ENCODE measurements at regions of chr5 and their contacts with region 1.

Region 1: DNA sequence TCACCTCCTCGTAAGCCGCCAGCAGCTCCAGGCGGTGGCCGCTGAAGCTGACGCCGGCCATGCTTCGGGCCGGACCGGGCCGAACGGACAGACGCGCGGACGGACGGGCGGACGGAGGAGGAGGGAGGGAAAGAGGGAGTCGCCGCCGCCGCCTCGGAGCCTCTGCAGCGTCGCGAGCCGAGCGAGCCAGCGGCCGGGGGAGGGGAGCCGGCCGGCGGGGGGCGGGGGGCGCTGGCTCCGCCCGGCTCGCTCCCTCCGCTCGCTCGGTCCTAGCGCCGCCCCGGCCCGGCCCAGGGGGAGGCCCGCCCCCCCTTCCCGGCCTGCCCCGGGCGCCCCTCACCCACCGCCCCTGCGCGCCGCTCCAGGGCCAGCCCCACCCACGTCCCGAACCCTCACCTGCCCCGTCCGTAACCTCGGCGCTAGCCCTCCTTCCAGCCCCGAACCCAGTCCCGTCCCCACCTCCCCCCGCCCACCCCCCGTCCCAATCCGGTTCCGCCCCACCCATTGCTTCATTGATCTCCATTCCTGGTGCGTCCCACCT is at the start of gene DBN1:
- DNase-seq: peak in 2 of 10 donors; percentile 26 to 42
- ATAC-seq: peak; percentile 28 to 31
- H3K4me3 Mint-ChIP-seq: peak within 1 kb of the TSS; percentile 78 to 92 (median 86)
- H3K27ac Mint-ChIP-seq: peak within 1 kb of the TSS; percentile 77 to 94 (median 88)
- H3K4me1 Mint-ChIP-seq: peaks cover 36 to 76% (median 62%) of the 10 kb centered on the region in 4 donors
- H3K27me3 Mint-ChIP-seq: no peaks in the 10 kb centered on the region
- polyA plus RNA-seq, gene DBN1: 20.5 to 25.3 (median 21.8) TPM

Region 2: GRCh38 chr5:177336112-177336511 is 137.4 kb before region 1 on chr5:
- POLR2A ChIA-PET with region 1: no interaction called
- DNase-seq: peak in 1 of 10 donors; percentile 19
- ATAC-seq: peak; percentile 68 to 73
- H3K4me3 Mint-ChIP-seq: peak overlapping the region in 1 of 10 donors; percentile 14
- H3K27ac Mint-ChIP-seq: peak overlapping the region in 1 of 10 donors; percentile 52
- H3K4me1 Mint-ChIP-seq: peaks cover 6 to 35% (median 28%) of the 10 kb centered on the region in 4 donors
- H3K27me3 Mint-ChIP-seq: no peaks in the 10 kb centered on the region

Region 3: GRCh38 chr5:177403792-177404640 is 69.5 kb before region 1 on chr5:
- POLR2A ChIA-PET with region 1: interaction called, 14 read pairs
- DNase-seq: peak; percentile 73 to 92 (median 82)
- ATAC-seq: peak; percentile 80 to 81
- H3K4me3 Mint-ChIP-seq: peak overlapping the region; percentile 60 to 89 (median 80)
- H3K27ac Mint-ChIP-seq: peak overlapping the region in 5 of 10 donors; percentile 27 to 88 (median 60)
- H3K4me1 Mint-ChIP-seq: peaks cover 2 to 47% (median 37%) of the 10 kb centered on the region in 4 donors
- H3K27me3 Mint-ChIP-seq: peaks cover 0 to 9% (median 0%) of the 10 kb centered on the region in 5 donors

Region 4: GRCh38 chr5:177425801-177426565 is 47.5 kb before region 1 on chr5:
- POLR2A ChIA-PET with region 1: interaction called, 15 read pairs
- DNase-seq: peak; percentile 94 to 100 (median 100)
- ATAC-seq: peak; percentile 82 to 84
- H3K4me3 Mint-ChIP-seq: peak overlapping the region; percentile 82 to 98 (median 94)
- H3K27ac Mint-ChIP-seq: peak overlapping the region; percentile 92 to 100 (median 98)
- H3K4me1 Mint-ChIP-seq: peaks cover 28 to 58% (median 49%) of the 10 kb centered on the region in 4 donors
- H3K27me3 Mint-ChIP-seq: no peaks in the 10 kb centered on the region

Region 5: DNA sequence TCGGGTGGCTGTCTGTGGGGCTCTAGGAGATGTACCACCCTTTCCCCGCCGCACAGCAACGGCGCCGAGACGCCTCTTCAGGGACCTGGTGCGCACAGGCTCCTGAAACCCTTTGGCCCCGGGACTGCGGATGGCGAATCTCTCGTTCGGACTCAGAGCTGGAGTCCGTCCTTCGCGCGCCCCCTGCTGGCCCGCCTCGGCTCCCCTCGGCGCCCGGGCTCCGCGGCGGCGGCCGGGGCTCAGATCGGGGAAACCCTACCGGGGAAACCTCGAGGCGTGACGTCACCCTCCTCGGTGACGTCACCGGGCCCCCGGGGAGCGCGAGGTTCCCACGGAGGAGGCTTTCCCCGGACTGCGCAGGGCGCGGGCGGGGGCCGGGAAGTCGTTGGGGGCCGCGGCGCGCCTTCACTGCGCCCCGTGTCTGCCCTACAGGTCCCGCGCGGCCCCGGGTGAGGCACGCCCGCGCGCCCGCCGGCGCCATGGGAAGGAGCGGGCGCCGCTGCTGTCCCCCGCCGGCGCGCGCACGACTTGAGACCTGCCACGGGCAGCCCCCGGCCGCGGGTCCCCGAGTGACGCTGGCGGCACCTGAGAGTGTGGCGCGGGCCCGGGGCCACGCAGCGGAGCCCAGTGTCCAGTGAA is 19.0 kb before region 1 on chr5:
- POLR2A ChIA-PET with region 1: interaction called, 58 read pairs
- DNase-seq: peak; percentile 84 to 98 (median 94)
- ATAC-seq: peak; percentile 46 to 56
- H3K4me3 Mint-ChIP-seq: peak overlapping the region; percentile 33 to 93 (median 84)
- H3K27ac Mint-ChIP-seq: peak overlapping the region in 8 of 10 donors; percentile 67 to 98 (median 90)
- H3K4me1 Mint-ChIP-seq: peaks cover 14 to 41% (median 28%) of the 10 kb centered on the region in 4 donors
- H3K27me3 Mint-ChIP-seq: no peaks in the 10 kb centered on the region

Region 6: GRCh38 chr5:177462021-177462670 is 11.4 kb before region 1 on chr5:
- POLR2A ChIA-PET with region 1: interaction called, 58 read pairs
- DNase-seq: no peak
- ATAC-seq: peak; percentile 12 to 37
- H3K4me3 Mint-ChIP-seq: peak overlapping the region in 1 of 10 donors; percentile 41
- H3K27ac Mint-ChIP-seq: peak overlapping the region in 5 of 10 donors; percentile 9 to 80 (median 60)
- H3K4me1 Mint-ChIP-seq: peaks cover 11 to 20% (median 18%) of the 10 kb centered on the region in 4 donors
- H3K27me3 Mint-ChIP-seq: no peaks in the 10 kb centered on the region

Region 7: DNA sequence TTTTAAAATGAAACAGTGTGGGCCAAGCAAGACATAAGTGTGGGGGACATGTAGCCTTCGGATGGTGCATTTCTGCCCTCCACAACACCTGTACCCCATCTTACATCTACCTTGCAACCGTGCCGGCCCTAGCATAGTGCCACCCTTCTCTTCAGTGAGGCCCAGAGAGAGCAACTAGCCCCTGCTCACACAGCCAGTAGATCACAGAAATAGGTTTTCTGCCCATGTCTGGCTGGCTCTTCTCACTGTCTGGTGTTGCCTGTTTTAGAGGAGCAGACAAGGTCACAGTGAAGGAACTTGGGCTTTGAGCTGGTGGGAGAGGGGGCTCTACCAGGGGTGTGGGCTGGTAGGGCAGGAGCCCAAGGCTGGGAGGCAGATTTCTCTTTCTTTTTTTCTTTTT is 12.7 kb after region 1 on chr5:
- POLR2A ChIA-PET with region 1: interaction called, 13 read pairs
- DNase-seq: no peak
- ATAC-seq: no peak
- H3K4me3 Mint-ChIP-seq: no peak overlapping the region
- H3K27ac Mint-ChIP-seq: peak overlapping the region in 1 of 10 donors; percentile 11
- H3K4me1 Mint-ChIP-seq: peaks cover 0 to 6% (median 2%) of the 10 kb centered on the region in 4 donors
- H3K27me3 Mint-ChIP-seq: no peaks in the 10 kb centered on the region

Region 8: GRCh38 chr5:177497292-177498033 is 23.9 kb after region 1 on chr5 and contains the start of gene PDLIM7:
- POLR2A ChIA-PET with region 1: interaction called, 36 read pairs
- DNase-seq: peak; percentile 84 to 94 (median 92)
- ATAC-seq: peak; percentile 86 to 89
- H3K4me3 Mint-ChIP-seq: peak within 1 kb of the TSS; percentile 70 to 90 (median 84)
- H3K27ac Mint-ChIP-seq: peak within 1 kb of the TSS in 9 of 10 donors; percentile 20 to 90 (median 69)
- H3K4me1 Mint-ChIP-seq: peaks cover 18 to 55% (median 41%) of the 10 kb centered on the region in 4 donors
- H3K27me3 Mint-ChIP-seq: peaks cover 0 to 2% (median 0%) of the 10 kb centered on the region in 5 donors
- polyA plus RNA-seq, gene PDLIM7: 4.3 to 5.8 (median 5.3) TPM

Measured in naive thymus-derived CD8-positive, alpha-beta T cell (primary cell).